PC-9 (cell line): ENCODE measurements at regions of chr7 and their contacts with region 1.

Region 1: DNA sequence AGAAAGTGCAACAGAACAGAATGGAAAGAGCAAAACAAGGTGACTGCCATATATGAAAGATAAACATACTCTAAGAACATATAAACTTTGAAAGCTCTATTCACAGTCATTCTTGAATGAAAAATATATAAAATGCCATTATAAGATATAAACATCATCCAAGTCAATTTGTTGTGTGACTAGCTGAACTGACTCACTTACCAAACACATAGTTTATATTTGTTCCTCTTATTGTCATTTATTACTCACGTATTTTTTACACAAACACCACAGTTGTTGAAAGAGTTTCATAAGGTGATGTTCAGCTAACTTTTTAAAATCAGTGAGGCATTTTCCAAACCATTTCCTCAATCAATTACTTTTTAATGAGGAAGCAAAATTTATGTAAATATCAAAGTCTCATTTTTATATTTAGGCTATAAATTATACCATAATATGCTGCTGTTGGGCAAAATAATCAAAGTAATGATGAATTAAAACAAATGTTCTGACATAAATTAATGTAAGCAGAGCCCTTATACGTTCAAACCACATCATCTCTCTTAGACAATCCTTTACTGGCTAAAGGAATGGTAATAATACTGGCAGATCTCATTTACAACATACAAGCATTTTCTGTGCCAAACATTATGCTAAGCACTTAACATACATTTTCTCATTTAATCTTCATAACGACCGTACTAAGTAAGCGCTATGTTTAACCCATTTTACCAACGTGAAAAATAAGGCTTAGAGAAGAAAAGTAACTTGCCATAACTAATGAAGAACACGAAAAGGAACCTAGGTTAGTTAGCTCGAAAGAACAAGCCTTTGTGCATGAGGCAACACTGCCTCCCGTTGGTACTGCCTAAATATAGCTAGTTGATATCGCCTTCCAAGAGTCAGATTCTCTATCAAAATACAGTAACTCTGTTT is 7.3 kb downstream of the LRRN3 start:
- DNase-seq: no peak
- H3K4me3 ChIP-seq: no peak overlapping the region
- H3K27ac ChIP-seq: no peak overlapping the region
- H3K4me1 ChIP-seq: no peaks in the 10 kb centered on the region
- H3K27me3 ChIP-seq: no peaks in the 10 kb centered on the region
- CTCF ChIP-seq: peak; percentile 50

Region 2: GRCh38 chr7:109844362-109844761 is 1253.9 kb before region 1 on chr7:
- CTCF ChIA-PET with region 1: no interaction called
- POLR2A ChIA-PET with region 1: no interaction called
- intact Hi-C with region 1: loop called (anchors 10 kb)
- DNase-seq: peak in 1 of 2 experiments; percentile 5
- H3K4me3 ChIP-seq: no peak overlapping the region
- H3K27ac ChIP-seq: no peak overlapping the region
- H3K4me1 ChIP-seq: no peaks in the 10 kb centered on the region
- H3K27me3 ChIP-seq: no peaks in the 10 kb centered on the region
- CTCF ChIP-seq: peak; percentile 72